Caco-2 (cell line): ENCODE measurements at regions of chr3 and their contacts with region 1.

Region 1: DNA sequence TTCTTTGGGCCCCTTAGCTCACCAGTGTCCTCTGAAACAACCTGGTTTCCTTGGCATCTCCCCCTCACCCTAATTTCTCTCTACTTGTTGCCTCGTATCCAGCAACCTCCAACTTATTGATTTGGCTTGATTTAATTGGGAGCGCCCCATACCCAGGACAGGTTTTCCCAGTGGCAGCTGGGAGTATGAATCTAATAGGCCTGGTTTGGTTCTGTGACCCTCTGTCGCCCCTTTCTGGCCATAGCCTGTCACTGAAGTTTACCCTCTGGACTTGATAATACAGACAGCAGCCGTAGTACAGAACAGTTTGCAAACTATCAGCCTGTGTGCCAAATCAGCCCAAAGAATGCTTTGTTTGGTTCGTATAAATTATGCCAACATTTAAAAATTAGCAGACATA is 525.1 kb upstream of the GOLIM4 start:
- DNase-seq: peak; percentile 54 to 63
- H3K4me3 ChIP-seq: no peak overlapping the region
- H3K4me3 Mint-ChIP-seq: no peak overlapping the region
- H3K27ac Mint-ChIP-seq: no peak overlapping the region
- H3K4me1 ChIP-seq: no peaks in the 10 kb centered on the region
- H3K4me1 Mint-ChIP-seq: no peaks in the 10 kb centered on the region
- H3K27me3 ChIP-seq: no peaks in the 10 kb centered on the region
- H3K27me3 Mint-ChIP-seq: peaks cover 8% of the 10 kb centered on the region
- CTCF ChIP-seq: peak; percentile 62 to 86

Region 2: GRCh38 chr3:168213920-168214319 is 406.9 kb before region 1 on chr3:
- CTCF ChIA-PET with region 1: no interaction called
- POLR2A ChIA-PET with region 1: no interaction called
- intact Hi-C with region 1: loop called (anchors 1 kb)
- DNase-seq: no peak
- H3K4me3 ChIP-seq: no peak overlapping the region
- H3K4me3 Mint-ChIP-seq: no peak overlapping the region
- H3K27ac Mint-ChIP-seq: no peak overlapping the region
- H3K4me1 ChIP-seq: 0 out of 2 replicates have a peak, but pooled peaks cover 3% of the 10 kb centered on the region
- H3K4me1 Mint-ChIP-seq: no peaks in the 10 kb centered on the region
- H3K27me3 ChIP-seq: no peaks in the 10 kb centered on the region
- H3K27me3 Mint-ChIP-seq: peaks cover 14% of the 10 kb centered on the region
- CTCF ChIP-seq: no peak

Region 3: DNA sequence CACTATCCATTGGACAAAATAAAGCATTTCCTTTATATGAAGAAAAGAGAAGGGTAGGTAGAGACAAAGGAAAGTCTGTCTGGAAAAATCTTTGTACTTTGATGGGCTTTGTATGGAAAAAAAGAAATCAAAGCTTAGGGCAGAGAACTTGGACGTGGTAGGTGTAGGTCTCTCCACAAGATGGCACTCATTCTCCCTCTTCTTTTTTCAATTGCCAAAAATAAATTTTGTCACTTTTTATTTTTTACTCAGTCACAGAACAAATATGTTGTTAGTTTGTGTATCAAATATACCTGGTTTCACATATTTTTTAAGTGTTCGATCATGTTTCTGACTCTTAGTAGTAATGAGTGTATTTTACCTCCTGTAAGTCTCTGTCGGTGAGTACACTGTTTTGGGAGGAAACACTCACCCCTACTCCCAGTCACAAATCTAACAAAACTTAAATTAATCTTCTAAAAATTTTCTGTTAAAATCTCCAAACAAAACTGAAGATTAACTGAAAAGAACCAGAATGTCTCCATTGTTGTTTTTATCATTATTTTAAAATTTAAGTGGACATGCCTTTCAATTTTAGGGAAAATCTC is 109.3 kb before region 1 on chr3:
- CTCF ChIA-PET with region 1: interaction called, 10 read pairs
- POLR2A ChIA-PET with region 1: no interaction called
- intact Hi-C with region 1: loop called (anchors 1 kb)
- DNase-seq: no peak
- H3K4me3 ChIP-seq: no peak overlapping the region
- H3K4me3 Mint-ChIP-seq: no peak overlapping the region
- H3K27ac Mint-ChIP-seq: no peak overlapping the region
- H3K4me1 ChIP-seq: no peaks in the 10 kb centered on the region
- H3K4me1 Mint-ChIP-seq: no peaks in the 10 kb centered on the region
- H3K27me3 ChIP-seq: no peaks in the 10 kb centered on the region
- H3K27me3 Mint-ChIP-seq: peaks cover 5% of the 10 kb centered on the region
- CTCF ChIP-seq: peak; percentile 14 to 62

Region 4: GRCh38 chr3:168659015-168659414 is 38.2 kb after region 1 on chr3:
- CTCF ChIA-PET with region 1: no interaction called
- POLR2A ChIA-PET with region 1: no interaction called
- intact Hi-C with region 1: no loop called
- DNase-seq: no peak
- H3K4me3 ChIP-seq: no peak overlapping the region
- H3K4me3 Mint-ChIP-seq: no peak overlapping the region
- H3K27ac Mint-ChIP-seq: no peak overlapping the region
- H3K4me1 ChIP-seq: no peaks in the 10 kb centered on the region
- H3K4me1 Mint-ChIP-seq: no peaks in the 10 kb centered on the region
- H3K27me3 ChIP-seq: no peaks in the 10 kb centered on the region
- H3K27me3 Mint-ChIP-seq: no peaks in the 10 kb centered on the region
- CTCF ChIP-seq: no peak

Region 5: GRCh38 chr3:168794427-168794826 is 173.6 kb after region 1 on chr3:
- CTCF ChIA-PET with region 1: no interaction called
- POLR2A ChIA-PET with region 1: no interaction called
- intact Hi-C with region 1: no loop called
- DNase-seq: no peak
- H3K4me3 ChIP-seq: no peak overlapping the region
- H3K4me3 Mint-ChIP-seq: no peak overlapping the region
- H3K27ac Mint-ChIP-seq: no peak overlapping the region
- H3K4me1 ChIP-seq: no peaks in the 10 kb centered on the region
- H3K4me1 Mint-ChIP-seq: no peaks in the 10 kb centered on the region
- H3K27me3 ChIP-seq: no peaks in the 10 kb centered on the region
- H3K27me3 Mint-ChIP-seq: peaks cover 3% of the 10 kb centered on the region
- CTCF ChIP-seq: no peak